Heart right ventricle (tissue), 16 donors: ENCODE measurements at regions of chr16 and their contacts with region 1.

Region 1: DNA sequence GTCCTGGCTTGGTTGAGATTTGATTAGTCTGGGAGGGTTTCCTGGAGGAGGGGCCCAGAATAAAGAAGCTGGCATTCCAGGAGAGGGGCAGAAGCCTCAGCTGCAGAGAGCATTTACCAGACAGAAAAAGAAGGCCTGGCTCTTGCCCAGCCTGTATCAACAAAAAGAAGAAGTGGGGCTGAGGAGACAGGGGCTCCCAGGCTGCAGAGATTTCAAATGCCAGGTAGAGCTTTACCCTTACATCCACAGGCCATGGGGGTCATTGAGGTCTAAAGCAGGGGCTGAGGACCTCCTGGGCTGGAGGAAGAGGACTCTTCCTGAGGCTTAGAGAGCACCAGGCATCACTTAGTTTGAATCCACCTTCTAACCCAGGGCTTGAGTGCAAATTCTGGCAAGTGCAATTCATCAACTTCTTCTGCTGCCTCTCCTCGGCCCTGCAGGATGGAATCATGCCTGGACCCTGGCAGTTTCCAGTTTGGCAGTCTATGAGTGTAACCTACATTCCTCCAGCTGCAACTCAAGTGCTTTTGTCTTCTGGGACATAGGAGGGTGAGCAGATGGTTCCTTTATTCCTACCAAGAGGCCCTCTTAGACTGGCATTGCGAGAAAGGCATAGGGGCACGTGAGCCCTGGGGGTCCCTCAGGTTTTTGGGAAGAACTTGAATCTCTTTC is 15.3 kb downstream of the CA7 start:
- DNase-seq: no peak
- ATAC-seq: peak in 1 of 8 donors; percentile 4
- H3K4me3 ChIP-seq: no peak overlapping the region
- H3K27ac ChIP-seq: no peak overlapping the region
- H3K4me1 ChIP-seq: peaks cover 0 to 6% (median 0%) of the 10 kb centered on the region in 9 donors
- H3K27me3 ChIP-seq: no peaks in the 10 kb centered on the region
- CTCF ChIP-seq: no peak

Region 2: DNA sequence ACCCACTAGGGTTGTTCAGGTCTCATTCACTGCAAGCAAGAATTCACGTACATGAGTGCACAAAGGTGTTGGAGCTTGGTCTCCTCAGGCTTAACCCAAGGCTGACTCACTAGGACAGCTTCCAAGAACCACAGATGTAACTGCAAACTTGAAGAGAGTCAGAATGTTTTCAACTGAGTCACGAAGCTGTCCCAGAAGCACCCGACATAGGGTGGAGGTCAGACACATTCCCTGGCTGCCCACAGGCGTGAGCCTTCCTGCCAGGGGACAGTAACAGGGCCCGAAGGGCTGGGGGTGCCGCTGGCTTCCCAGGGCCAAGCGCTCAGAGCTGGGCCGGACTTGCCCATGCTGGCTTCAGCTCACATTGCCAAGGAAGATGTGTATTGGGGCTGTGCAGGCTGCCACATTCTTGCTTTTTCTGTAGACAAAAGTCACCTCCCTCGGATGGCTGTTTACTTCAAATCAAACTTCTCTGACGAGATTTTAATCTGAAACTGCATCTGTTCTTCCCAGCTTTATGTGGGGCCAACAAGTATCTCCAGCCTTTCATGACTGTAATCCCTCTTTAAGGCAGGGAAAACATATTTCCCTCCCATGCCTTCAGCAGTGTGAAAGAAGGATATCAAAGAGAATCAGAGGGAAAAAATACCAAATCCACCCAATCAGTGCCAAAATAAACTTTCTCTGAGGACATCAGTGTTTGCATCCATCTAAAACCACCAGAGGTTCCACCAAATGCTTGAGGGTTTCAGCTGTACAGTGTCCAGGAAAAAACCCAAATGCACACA is 240.8 kb before region 1 on chr16:
- intact Hi-C with region 1: loop called in 1 of 10 experiments (anchors 10 kb)
- DNase-seq: no peak
- ATAC-seq: peak in 6 of 8 donors; percentile 22 to 71 (median 43)
- H3K4me3 ChIP-seq: no peak overlapping the region
- H3K27ac ChIP-seq: peak overlapping the region in 1 of 10 donors; percentile 26
- H3K4me1 ChIP-seq: peaks cover 0 to 27% (median 18%) of the 10 kb centered on the region in 9 donors
- H3K27me3 ChIP-seq: no peaks in the 10 kb centered on the region
- CTCF ChIP-seq: no peak

Region 3: GRCh38 chr16:66728117-66728787 is 131.3 kb before region 1 on chr16:
- intact Hi-C with region 1: loop called in 3 of 10 experiments (anchors 10 kb)
- DNase-seq: peak in 1 of 2 donors; percentile 48
- ATAC-seq: peak; percentile 73 to 92 (median 84)
- H3K4me3 ChIP-seq: no peak overlapping the region
- H3K27ac ChIP-seq: peak overlapping the region in 1 of 10 donors; percentile 36
- H3K4me1 ChIP-seq: peaks cover 0 to 20% (median 8%) of the 10 kb centered on the region in 9 donors
- H3K27me3 ChIP-seq: no peaks in the 10 kb centered on the region
- CTCF ChIP-seq: peak; percentile 53 to 79 (median 74)

Region 4: DNA sequence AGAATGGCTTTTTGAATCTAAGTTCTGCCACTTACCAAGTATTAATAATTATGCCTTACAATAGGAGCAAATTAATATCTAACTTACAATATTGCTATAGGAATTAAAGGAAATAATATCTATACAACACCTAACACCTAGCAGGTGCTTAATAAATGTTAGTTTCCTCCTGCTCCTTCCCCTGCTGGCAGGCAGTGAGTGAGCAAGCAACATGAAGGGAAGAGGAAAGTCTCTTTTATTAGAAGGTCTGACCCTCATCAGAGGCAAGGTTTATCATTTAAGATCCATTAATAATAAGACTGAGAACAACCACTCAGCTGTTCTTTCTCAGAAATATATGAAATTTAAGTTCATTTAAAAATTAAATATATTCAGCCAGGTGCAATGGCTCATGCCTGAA is 101.4 kb before region 1 on chr16:
- intact Hi-C with region 1: no loop called
- DNase-seq: no peak
- ATAC-seq: no peak
- H3K4me3 ChIP-seq: no peak overlapping the region
- H3K27ac ChIP-seq: no peak overlapping the region
- H3K4me1 ChIP-seq: no peaks in the 10 kb centered on the region
- H3K27me3 ChIP-seq: peaks cover 0 to 11% (median 0%) of the 10 kb centered on the region in 7 donors
- CTCF ChIP-seq: no peak

Region 5: DNA sequence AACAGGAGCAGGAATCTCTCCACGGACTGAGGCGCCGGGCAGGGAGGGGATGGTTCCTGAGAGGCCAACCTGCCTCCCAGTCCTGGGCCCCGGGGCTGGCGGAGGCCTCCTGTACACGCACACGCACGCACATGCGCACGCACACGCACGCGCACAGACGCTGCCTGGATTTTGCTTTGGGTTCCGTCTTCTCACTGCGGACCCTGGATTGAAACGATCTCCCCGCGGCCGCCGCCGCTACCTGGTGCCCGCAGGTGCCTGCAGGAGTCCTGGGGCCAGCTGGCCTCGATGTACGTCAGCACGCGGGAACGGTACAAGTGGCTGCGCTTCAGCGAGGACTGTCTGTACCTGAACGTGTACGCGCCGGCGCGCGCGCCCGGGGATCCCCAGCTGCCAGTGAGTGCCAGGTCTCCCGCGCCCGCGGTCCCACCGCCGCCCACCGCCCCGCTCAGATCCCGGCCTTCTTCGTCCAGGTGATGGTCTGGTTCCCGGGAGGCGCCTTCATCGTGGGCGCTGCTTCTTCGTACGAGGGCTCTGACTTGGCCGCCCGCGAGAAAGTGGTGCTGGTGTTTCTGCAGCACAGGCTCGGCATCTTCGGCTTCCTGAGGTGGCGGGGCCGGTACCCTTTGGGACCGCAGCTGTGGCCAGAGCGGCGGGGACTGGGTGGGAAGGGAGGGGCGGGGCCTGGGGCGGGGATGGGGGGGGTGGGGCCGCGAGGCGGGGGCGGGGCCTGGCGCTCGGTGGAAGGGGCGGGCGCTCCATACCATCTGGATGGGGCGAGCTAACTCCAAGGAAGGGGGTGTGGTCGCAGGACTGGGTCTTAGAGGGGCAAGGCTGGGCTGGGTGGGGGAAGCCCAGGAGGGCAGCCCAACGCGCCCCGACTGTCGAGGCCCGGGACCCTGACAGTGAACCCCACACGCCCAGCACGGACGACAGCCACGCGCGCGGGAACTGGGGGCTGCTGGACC is 141.1 kb after region 1 on chr16:
- intact Hi-C with region 1: no loop called
- DNase-seq: peak; percentile 22 to 51
- ATAC-seq: peak; percentile 12 to 72 (median 46)
- H3K4me3 ChIP-seq: peak overlapping the region; percentile 16 to 67 (median 57)
- H3K27ac ChIP-seq: peak overlapping the region in 2 of 10 donors; percentile 20 to 34
- H3K4me1 ChIP-seq: peaks cover 3 to 34% (median 22%) of the 10 kb centered on the region in 9 donors
- H3K27me3 ChIP-seq: peaks cover 0 to 7% (median 0%) of the 10 kb centered on the region in 7 donors
- CTCF ChIP-seq: no peak